Gastrocnemius medialis (tissue), 4 donors: ENCODE measurements at regions of chr19 and their contacts with region 1.

Region 1: GRCh38 chr19:12995596-12996405 is 526 bp downstream of the NFIX start:
- DNase-seq: no peak
- ATAC-seq: peak; percentile 34 to 37
- H3K4me3 ChIP-seq: peak overlapping the region; percentile 63 to 86 (median 80)
- H3K27ac ChIP-seq: peak overlapping the region; percentile 97 to 100 (median 99)
- H3K4me1 ChIP-seq: peaks cover 38 to 43% of the 10 kb centered on the region in 2 donors
- H3K27me3 ChIP-seq: no peaks in the 10 kb centered on the region
- CTCF ChIP-seq: no peak
- POLR2A ChIP-seq: peak in 1 of 2 donors; percentile 9

Region 2: DNA sequence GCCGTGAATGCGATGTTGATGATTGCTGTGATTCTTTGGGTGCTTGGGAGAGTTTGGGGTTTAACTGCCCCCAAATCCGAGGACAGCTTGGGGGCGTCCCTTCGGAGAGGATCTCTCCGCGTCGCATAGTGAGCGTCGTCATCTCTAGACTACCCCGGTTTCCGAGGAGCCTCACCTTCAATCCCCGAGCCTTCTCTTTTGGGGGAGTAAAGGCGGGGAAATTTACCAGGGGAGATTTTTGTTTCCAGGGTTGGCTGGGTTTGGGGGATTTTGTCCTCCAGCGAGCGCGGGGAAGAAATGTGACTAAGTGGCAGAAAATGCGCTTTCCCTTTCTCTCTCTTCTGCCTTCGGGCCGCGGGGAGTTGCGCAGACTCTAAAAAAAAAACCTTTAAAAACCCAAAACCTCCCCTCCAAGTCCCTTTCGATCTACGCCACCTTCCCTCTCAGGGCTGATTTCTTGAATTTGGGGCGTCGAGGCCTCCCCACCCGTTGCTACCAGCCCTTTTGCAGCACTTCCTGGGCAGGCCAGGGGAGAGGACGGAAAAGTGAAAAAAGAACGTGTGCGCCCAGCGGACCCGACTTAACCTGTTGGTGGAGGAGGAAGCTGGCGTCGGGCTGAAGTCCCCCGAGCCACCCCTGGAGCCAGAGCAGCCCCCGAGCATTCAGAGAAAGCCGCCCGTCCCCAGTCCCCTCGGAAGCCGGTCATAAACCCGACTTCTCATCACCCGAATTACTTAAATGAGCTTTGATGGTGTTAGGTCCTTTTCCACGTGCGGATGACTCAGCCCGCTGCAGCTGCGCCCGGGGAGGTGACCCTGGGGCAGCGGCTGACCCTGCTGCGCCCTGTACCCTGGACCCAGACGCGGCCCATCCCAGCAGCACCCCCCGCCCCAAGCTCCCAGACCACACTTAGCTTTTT is 17.1 kb after region 1 on chr19:
- in situ Hi-C with region 1: no loop called
- intact Hi-C with region 1: loop called (anchors 2 kb)
- DNase-seq: peak; percentile 91 to 93
- ATAC-seq: peak; percentile 55 to 74
- H3K4me3 ChIP-seq: peak overlapping the region; percentile 52 to 74 (median 59)
- H3K27ac ChIP-seq: peak overlapping the region; percentile 97 to 100 (median 99)
- H3K4me1 ChIP-seq: peaks cover 71 to 79% of the 10 kb centered on the region in 2 donors
- H3K27me3 ChIP-seq: no peaks in the 10 kb centered on the region
- CTCF ChIP-seq: no peak
- POLR2A ChIP-seq: peak; percentile 92 to 94

Region 3: DNA sequence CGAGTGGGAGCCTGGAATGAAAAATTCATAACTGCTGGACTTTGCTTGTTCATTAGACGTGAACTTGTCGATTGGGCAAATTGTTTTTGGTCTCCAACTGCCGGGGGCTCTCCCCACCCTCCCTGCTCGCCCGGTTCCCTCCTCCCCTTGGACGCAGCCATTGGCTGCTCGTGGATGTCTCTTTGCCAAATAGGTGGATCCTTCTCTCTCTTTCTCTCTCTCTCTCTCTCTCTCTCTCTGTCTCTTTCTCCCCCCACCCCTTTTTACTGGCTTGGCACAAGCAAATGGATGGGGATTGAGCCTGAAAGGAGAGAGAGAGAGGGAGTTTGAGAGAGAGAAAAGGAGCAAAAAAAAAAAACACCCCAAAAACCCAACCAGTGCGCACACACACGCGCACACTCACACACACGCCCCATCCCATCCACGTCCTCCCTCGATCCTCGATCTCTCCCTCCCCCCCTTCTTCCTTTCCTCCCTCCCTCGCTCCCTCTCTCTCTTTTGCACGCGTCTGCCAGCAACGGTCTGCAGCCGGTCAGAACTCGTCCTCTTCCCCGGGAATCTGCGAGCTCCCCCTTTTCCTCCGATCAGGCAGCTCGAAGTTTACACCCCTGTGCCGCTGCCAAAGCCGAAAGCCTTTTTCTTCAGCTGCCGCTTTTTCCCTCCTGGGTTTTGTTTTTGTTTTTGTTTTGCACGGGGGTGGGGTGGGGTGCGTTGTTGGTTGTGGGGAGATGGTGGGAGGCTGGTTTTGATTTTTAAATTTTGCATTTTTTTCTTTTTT is 27.2 kb after region 1 on chr19:
- in situ Hi-C with region 1: no loop called
- intact Hi-C with region 1: loop called (anchors 2 kb)
- DNase-seq: peak; percentile 82 to 91
- ATAC-seq: peak; percentile 64 to 71
- H3K4me3 ChIP-seq: peak overlapping the region; percentile 41 to 55 (median 51)
- H3K27ac ChIP-seq: peak overlapping the region; percentile 97 to 100 (median 99)
- H3K4me1 ChIP-seq: peaks cover 77 to 91% of the 10 kb centered on the region in 2 donors
- H3K27me3 ChIP-seq: no peaks in the 10 kb centered on the region
- CTCF ChIP-seq: peak in 2 of 5 experiments; percentile 29 to 34
- POLR2A ChIP-seq: peak in 1 of 2 donors; percentile 13